Psoas muscle (tissue), 8 donors: ENCODE measurements at regions of chr4 and their contacts with region 1.

Region 1: DNA sequence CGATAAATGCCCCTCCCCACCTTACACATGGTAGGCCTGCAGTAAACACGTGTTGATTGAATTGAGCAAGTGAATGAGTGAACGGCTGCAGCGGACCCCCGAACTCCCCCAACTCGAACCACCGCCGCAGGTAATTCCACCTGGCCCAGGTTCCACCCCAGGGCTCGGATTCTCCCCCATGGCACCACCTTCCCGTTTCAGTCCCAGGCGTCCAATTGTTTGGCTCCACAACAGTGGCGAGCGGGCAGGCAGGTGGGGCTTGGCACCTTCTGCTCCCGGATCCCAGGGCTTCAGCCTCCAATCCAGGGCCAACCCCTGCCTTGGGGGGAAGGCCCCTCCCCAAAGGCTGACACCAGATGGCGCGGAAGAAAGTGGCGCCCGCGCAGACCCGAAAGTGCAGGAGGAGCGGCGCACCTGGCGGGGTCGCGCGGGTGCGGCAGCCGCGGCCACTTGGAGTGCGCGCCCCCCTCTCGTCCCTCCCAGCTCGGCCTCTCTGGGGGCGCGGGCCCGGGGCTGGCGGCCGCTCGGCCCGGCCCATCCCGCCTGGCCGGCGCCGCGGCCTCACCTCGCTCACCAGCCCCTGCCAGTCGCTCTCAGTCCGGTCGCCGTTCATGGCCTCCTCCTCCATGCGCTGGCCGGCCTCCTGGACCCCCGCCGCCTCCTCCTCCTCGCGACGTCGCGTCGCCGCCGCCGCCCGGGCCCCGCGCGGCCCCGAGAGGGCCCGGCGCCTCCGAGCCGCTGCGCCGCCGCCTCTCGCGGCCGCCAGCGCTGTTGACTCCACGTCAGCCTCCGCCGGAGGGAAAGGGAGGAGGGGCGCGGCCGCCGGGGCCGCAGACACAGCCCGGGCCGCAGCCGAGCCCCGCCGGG is at the start of gene CCDC149:
- DNase-seq: peak; percentile 68 to 79
- ATAC-seq: peak; percentile 82 to 88 (median 86)
- H3K4me3 ChIP-seq: peak within 1 kb of the TSS; percentile 83
- H3K27ac ChIP-seq: peak within 1 kb of the TSS; percentile 88
- H3K4me1 ChIP-seq: no peaks in the 10 kb centered on the region
- H3K27me3 ChIP-seq: no peaks in the 10 kb centered on the region
- CTCF ChIP-seq: peak; percentile 13
- total RNA-seq, gene CCDC149: 7.8 to 10.8 (median 9.3) TPM

Region 2: GRCh38 chr4:24743931-24744330 is 168.6 kb before region 1 on chr4:
- intact Hi-C with region 1: loop called in 1 of 2 experiments (anchors 5 kb)
- DNase-seq: no peak
- ATAC-seq: peak; percentile 30 to 78 (median 60)
- H3K4me3 ChIP-seq: no peak overlapping the region
- H3K27ac ChIP-seq: peak overlapping the region; percentile 18
- H3K4me1 ChIP-seq: peaks cover 51% of the 10 kb centered on the region
- H3K27me3 ChIP-seq: no peaks in the 10 kb centered on the region
- CTCF ChIP-seq: no peak

Region 3: GRCh38 chr4:24973733-24974601 is 61.5 kb after region 1 on chr4:
- intact Hi-C with region 1: loop called in 1 of 2 experiments (anchors 5 kb)
- DNase-seq: peak; percentile 40 to 75
- ATAC-seq: peak in 1 of 4 donors; percentile 30
- H3K4me3 ChIP-seq: no peak overlapping the region
- H3K27ac ChIP-seq: no peak overlapping the region
- H3K4me1 ChIP-seq: no peaks in the 10 kb centered on the region
- H3K27me3 ChIP-seq: no peaks in the 10 kb centered on the region
- CTCF ChIP-seq: no peak

Region 4: DNA sequence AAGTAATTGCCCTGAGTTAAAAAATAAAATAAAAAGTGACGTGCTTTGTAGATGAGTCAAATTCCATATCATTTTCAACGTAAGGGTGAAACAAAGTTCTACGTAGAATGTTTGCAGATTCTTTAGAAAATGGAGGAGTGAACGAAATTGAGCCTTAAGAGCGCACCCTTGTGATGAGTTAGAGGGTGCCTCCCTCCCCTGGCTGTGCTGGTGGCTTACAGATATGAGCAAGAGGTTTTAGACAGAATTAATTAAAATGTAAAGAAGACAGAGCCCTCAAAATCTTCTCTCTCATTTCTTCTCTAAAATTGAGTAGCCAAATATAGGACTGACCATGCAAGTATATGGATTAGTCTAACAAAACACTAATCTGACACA is 148.5 kb after region 1 on chr4:
- intact Hi-C with region 1: no loop called
- DNase-seq: no peak
- ATAC-seq: no peak
- H3K4me3 ChIP-seq: no peak overlapping the region
- H3K27ac ChIP-seq: no peak overlapping the region
- H3K4me1 ChIP-seq: no peaks in the 10 kb centered on the region
- H3K27me3 ChIP-seq: no peaks in the 10 kb centered on the region
- CTCF ChIP-seq: no peak